ENCODE measurements at regions of chr12 and their contacts with region 1.

Region 1: DNA sequence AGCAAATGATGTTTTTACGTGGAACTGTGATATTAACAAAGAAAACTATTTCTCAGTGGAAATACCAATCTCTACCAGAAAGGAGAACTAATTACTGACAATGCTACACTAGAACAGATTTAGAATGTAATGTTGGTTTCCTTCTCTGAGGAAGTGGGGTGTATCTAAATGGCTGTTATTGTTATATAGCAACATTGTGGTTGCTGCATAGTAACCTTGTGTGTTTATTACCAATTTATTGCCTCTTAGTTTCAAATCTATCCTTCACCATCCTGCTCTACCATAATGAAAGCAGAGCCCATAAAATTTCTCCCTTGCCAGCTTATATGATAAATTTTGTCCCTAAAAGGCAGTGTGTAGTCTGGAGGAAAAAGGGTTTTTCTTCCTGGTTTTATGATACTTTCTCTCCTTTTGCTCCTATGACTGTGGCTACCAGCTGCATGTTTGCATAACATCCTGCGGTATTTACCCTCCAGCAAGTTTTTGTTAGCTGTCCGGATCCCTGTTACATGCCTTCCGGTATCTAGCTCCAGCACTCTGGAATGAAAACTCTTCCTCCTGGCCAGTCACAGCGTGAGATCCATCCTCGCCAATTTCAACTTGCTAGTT is 5.7 kb upstream of the KLRK1 start:
- DNase-seq: peak; percentile 51
- H3K4me3 Mint-ChIP-seq: peak overlapping the region; percentile 58
- H3K27ac Mint-ChIP-seq: peak overlapping the region; percentile 97
- H3K4me1 Mint-ChIP-seq: peaks cover 32% of the 10 kb centered on the region
- H3K27me3 Mint-ChIP-seq: no peaks in the 10 kb centered on the region
- CTCF ChIP-seq: no peak

Region 2: DNA sequence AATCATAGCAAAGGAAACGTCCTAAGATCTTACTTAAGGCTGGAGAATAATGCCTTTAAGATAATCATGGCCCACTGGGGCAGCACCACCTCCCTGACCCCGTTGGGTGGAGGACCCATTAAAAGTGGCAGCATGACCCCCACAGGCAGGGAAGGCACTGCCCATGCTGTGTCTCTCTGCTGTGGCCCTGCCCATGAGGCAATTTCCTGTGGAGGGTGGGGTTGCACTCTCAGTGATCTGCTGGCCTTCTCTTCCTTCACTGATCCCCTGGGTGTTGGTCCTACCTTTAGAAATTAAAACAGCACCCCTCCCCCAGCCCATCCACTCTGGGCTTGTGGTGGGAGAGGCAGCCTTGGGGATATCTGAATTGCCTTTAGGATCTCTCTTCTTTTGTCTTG is 23.0 kb before region 1 on chr12:
- CTCF ChIA-PET with region 1: no interaction called
- intact Hi-C with region 1: loop called (anchors 2 kb)
- DNase-seq: peak; percentile 60
- H3K4me3 Mint-ChIP-seq: peak overlapping the region; percentile 16
- H3K27ac Mint-ChIP-seq: peak overlapping the region; percentile 87
- H3K4me1 Mint-ChIP-seq: peaks cover 60% of the 10 kb centered on the region
- H3K27me3 Mint-ChIP-seq: no peaks in the 10 kb centered on the region
- CTCF ChIP-seq: no peak

Region 3: GRCh38 chr12:11015775-11016430 is 620.4 kb after region 1 on chr12:
- CTCF ChIA-PET with region 1: no interaction called
- intact Hi-C with region 1: no loop called
- DNase-seq: peak; percentile 7
- H3K4me3 Mint-ChIP-seq: no peak overlapping the region
- H3K27ac Mint-ChIP-seq: peak overlapping the region; percentile 11
- H3K4me1 Mint-ChIP-seq: peaks cover 15% of the 10 kb centered on the region
- H3K27me3 Mint-ChIP-seq: no peaks in the 10 kb centered on the region
- CTCF ChIP-seq: no peak